Activated T-helper 1 cell treated with anti-CD3 and anti-CD28 coated beads, Interleukin-12 subunit alpha, Interleukin-12 subunit beta, Interleukin-2, Interleukin-4 antibody, amounts not matched to agents 30 ng/mL and 10 ng/mL and 1 ng/mL, durations not matched to agents 14 hours and 24 hours and 36 hours (primary cell): ENCODE measurements at regions of chr9 and their contacts with region 1.

Region 1: DNA sequence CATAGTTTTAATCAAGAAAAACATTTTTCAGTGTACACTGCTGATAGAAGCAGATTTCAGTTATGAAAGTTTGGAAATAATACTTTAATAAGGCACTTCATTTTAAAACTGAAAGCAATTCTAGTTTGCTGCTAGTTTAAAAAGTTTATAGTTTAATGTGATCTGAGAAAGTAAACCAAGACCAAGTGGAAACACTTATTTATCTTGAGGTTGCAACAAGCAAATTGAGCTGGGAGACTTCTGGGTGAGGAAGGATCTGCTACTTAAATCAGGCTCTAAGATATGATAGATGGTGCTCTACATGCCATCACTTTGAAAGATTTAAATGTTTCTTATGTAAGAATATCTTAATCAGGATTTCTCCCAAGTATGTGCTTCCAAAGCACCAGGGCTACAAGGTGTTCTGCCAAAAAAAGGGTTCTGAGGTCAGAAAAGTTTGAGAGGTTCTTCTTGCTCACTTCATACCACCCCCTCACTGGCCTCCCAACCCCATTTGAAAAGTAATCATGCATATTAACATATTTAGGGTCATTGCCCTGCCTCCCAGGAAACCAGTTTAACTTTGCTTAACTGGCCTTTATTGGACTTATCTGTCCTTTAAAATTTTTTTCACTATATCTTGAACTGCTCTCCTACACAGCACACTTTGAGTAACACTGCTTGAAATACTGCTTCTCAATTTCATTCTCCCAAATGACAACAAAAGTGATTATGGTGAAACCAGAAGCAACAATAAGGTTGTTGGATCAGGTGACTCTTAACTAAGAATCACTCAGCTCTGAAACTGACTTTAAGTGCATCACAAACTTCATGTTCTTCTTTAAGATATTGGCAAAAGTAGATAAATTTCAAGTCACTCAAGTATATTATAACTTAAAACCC is 15.5 kb downstream of the SLC44A1 start:
- DNase-seq: no peak
- H3K4me3 Mint-ChIP-seq: no peak overlapping the region
- H3K27ac Mint-ChIP-seq: no peak overlapping the region
- H3K4me1 Mint-ChIP-seq: peaks cover 35% of the 10 kb centered on the region
- H3K27me3 Mint-ChIP-seq: no peaks in the 10 kb centered on the region

Region 2: DNA sequence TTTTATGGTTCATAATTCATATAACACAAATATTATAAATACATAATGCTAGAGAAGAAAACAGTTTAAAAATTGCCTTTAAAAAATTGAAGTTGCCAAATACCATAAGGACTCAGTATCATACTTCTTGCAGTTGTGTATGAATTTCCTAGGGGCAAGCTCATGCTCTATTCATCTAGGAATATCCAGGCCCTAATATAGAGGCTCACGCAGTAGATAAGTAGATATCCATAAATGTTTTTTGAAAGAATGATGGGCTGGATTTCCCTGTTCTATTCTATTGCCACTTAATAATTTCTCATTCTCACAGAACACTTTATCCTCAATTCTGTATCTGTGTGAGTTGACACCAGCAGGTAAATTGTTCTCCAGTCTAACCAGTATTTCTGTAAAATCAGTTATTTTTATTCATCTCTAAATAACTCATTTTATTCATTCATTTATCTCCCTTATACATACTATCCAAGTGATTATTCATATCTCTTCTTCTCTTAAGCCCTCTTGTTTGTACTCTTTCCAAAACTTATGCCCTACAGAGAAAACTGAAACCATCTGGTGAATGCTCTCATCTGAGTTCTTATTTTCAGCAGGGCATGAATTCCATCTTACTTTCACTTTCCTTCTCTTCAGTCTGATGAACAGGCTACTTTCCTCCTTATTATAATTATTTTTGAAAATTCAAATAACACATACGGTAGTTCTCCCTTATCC is 81.6 kb after region 1 on chr9:
- intact Hi-C with region 1: loop called (anchors 2 kb)
- DNase-seq: no peak
- H3K4me3 Mint-ChIP-seq: no peak overlapping the region
- H3K27ac Mint-ChIP-seq: no peak overlapping the region
- H3K4me1 Mint-ChIP-seq: peaks cover 23% of the 10 kb centered on the region
- H3K27me3 Mint-ChIP-seq: no peaks in the 10 kb centered on the region